Activated CD4-positive, alpha-beta memory T cell treated with anti-CD3 and anti-CD28 coated beads for 36 hours (primary cell): ENCODE measurements at regions of chr19 and their contacts with region 1.

Region 1: GRCh38 chr19:58386576-58387337 is at the start of gene RPS5:
- DNase-seq: peak; percentile 97
- H3K4me3 Mint-ChIP-seq: peak within 1 kb of the TSS; percentile 94
- H3K27ac Mint-ChIP-seq: peak within 1 kb of the TSS; percentile 95
- H3K4me1 Mint-ChIP-seq: peaks cover 44% of the 10 kb centered on the region
- H3K27me3 Mint-ChIP-seq: no peaks in the 10 kb centered on the region
- total RNA-seq, gene RPS5: 1,415 to 1,438 TPM

Region 2: DNA sequence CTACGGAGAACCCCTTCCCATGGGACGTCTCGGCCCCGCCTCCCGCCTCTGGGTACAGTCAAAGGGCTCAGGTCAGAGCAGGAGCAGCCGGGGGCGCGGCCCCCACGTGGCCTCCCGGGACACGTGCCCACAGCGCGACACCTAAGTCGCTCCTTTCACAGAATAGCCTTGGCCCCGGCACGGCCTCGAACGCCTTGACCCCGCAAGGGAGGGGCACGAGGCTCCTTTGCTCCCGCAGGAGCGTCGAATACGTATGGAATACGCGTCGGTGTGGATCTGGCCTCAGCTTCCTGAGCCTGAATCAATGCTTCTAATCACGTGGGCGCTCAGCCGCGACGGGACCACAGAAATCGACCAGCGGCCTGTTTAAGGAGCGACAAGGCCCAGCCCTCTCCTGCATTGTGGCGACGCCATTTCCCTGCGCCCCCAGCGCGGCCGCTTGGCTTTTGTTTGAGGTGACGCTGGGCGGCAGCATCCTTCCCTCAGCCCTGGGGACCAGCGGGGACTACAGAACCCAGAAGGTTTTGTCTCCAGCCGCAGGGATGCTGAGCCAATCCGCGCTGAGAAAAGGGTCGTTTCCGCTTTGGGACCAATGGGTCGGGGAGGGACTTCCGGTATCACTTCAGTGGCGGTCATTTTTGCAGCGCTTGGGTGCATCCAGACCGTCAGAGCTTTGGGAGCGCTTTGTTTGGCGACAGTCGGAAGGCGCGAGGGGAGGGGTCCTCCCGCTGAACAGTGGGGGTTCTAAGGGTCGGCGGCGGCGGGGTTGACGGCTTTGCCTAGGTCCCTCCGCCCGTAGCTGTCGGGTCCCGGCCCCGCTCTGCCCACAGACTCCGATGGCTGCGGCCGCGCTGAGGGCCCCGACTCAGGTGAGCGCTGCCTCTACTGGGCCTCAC is 803.0 kb before region 1 on chr19 and contains the start of gene ZIK1:
- CTCF ChIA-PET with region 1: no interaction called
- POLR2A ChIA-PET with region 1: no interaction called
- intact Hi-C with region 1: loop called (anchors 5 kb)
- DNase-seq: peak; percentile 91
- H3K4me3 Mint-ChIP-seq: peak within 1 kb of the TSS; percentile 86
- H3K27ac Mint-ChIP-seq: peak within 1 kb of the TSS; percentile 69
- H3K4me1 Mint-ChIP-seq: peaks cover 21% of the 10 kb centered on the region
- H3K27me3 Mint-ChIP-seq: no peaks in the 10 kb centered on the region
- total RNA-seq, gene ZIK1: 3.4 to 3.6 TPM

Region 3: DNA sequence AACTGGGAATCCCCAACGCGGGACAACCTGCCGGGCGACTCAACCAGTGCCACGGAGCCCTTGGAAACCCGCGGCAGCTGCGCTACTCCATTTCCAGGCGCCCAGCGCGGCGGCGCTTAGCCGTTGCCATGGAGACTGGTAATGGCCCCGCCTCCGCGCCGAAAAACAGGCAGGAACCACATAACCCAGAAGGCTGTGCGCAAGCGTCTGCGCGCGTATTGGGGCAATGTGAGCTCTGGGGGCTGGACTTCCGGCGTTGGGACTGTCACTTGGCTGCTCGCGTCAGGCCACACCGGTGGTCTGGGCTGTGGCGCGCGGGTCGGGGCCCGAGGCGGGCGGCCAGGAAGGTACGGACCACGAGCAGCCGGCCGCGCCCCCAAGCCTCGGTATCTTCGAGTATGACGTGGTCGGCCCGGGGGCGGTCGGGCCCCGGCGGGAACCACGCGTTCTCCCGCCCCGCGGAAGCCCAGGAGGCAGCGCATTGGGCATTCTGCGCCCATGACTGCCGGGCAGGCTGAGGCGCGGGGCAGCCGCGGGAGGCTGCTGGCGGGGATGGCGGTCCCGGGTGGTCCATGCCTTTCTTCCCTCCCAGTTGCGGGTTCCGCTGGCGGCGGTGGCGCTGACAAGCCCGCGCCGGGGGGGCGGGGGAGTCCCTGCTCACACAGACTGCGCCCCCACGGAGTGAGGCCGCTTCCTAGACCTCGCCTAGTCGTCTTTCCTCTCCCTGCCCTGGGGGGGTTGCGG is 64.8 kb after region 1 on chr19 and contains the start of gene ZNF324B:
- CTCF ChIA-PET with region 1: no interaction called
- POLR2A ChIA-PET with region 1: no interaction called
- intact Hi-C with region 1: loop called (anchors 2 kb)
- DNase-seq: peak; percentile 97
- H3K4me3 Mint-ChIP-seq: peak within 1 kb of the TSS; percentile 78
- H3K27ac Mint-ChIP-seq: no peak within 1 kb of the TSS
- H3K4me1 Mint-ChIP-seq: peaks cover 21% of the 10 kb centered on the region
- H3K27me3 Mint-ChIP-seq: peaks cover 13% of the 10 kb centered on the region
- total RNA-seq, gene ZNF324B: 7.7 to 7.8 TPM